CD8-positive, alpha-beta T cell (primary cell): ENCODE measurements at regions of chr2 and their contacts with region 1.

Region 1: DNA sequence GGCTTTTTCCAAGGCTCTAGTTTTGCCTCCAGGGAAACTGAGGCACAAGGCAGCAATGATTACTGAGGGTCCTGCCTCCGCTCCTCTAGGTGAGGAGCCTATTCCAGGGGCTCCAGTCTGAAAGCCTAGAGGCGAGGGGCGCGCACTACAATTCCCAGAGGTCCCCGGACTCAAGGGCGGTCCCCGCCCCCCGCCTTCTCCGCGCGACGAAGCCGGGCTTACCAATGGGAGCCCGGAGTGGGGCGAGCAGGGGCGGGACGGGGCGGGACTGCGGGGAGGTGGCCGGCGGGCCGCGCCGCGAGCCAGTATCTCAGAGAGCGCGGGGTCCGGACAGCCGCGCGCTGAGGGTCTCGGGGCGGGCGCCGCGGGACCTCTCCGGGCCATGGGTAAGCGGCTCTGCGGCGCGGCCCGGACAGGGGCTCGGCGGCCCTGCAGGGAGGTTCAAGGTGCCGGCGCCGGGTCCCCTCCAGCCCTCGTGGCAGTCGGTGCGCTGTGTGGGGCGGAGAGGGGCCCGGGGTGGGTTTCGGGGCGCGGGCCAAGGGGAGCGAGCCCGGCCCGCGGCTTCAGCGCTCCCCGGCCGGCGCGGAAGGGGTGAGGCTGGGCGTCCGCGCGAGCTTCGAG is at the start of gene ARID5A:
- DNase-seq: peak; percentile 84 to 95 (median 92)
- ATAC-seq: peak; percentile 48
- H3K4me3 ChIP-seq: peak within 1 kb of the TSS; percentile 81
- H3K4me3 Mint-ChIP-seq: peak within 1 kb of the TSS; percentile 98
- H3K27ac ChIP-seq: peak within 1 kb of the TSS; percentile 93 to 97
- H3K27ac Mint-ChIP-seq: peak within 1 kb of the TSS; percentile 100
- H3K4me1 ChIP-seq: peaks cover 43% of the 10 kb centered on the region
- H3K4me1 Mint-ChIP-seq: peaks cover 43% of the 10 kb centered on the region
- H3K27me3 ChIP-seq: no peaks in the 10 kb centered on the region
- H3K27me3 Mint-ChIP-seq: no peaks in the 10 kb centered on the region
- CTCF ChIP-seq: peak; percentile 48
- total RNA-seq, gene ARID5A: 408 to 413 TPM

Region 2: GRCh38 chr2:96116879-96117697 is 419.5 kb before region 1 on chr2:
- CTCF ChIA-PET with region 1: no interaction called
- POLR2A ChIA-PET with region 1: interaction called, 3 read pairs
- intact Hi-C with region 1: loop called in 1 of 2 experiments (anchors 5 kb)
- DNase-seq: peak; percentile 31 to 81 (median 61)
- ATAC-seq: peak; percentile 72
- H3K4me3 ChIP-seq: peak overlapping the region; percentile 7 to 50
- H3K4me3 Mint-ChIP-seq: peak overlapping the region; percentile 76
- H3K27ac ChIP-seq: no peak overlapping the region
- H3K27ac Mint-ChIP-seq: peak overlapping the region; percentile 74
- H3K4me1 ChIP-seq: peaks cover 8% of the 10 kb centered on the region
- H3K4me1 Mint-ChIP-seq: peaks cover 12% of the 10 kb centered on the region
- H3K27me3 ChIP-seq: peaks cover 0 to 3% of the 10 kb centered on the region in 2 experiments
- H3K27me3 Mint-ChIP-seq: peaks cover 23% of the 10 kb centered on the region
- CTCF ChIP-seq: peak; percentile 84

Region 3: GRCh38 chr2:96208143-96209010 is 328.2 kb before region 1 on chr2 and contains the start of gene STARD7:
- CTCF ChIA-PET with region 1: no interaction called
- POLR2A ChIA-PET with region 1: no interaction called
- intact Hi-C with region 1: loop called (anchors 2 to 5 kb)
- DNase-seq: peak; percentile 89 to 98 (median 96)
- ATAC-seq: peak; percentile 85
- H3K4me3 ChIP-seq: peak within 1 kb of the TSS; percentile 91
- H3K4me3 Mint-ChIP-seq: peak within 1 kb of the TSS; percentile 100
- H3K27ac ChIP-seq: peak within 1 kb of the TSS; percentile 75
- H3K27ac Mint-ChIP-seq: peak within 1 kb of the TSS; percentile 99
- H3K4me1 ChIP-seq: peaks cover 52% of the 10 kb centered on the region
- H3K4me1 Mint-ChIP-seq: peaks cover 54% of the 10 kb centered on the region
- H3K27me3 ChIP-seq: no peaks in the 10 kb centered on the region
- H3K27me3 Mint-ChIP-seq: no peaks in the 10 kb centered on the region
- CTCF ChIP-seq: no peak
- total RNA-seq, gene STARD7: 75.3 to 85.1 TPM

Region 4: GRCh38 chr2:96320728-96321622 is 215.6 kb before region 1 on chr2:
- CTCF ChIA-PET with region 1: no interaction called
- POLR2A ChIA-PET with region 1: interaction called, 10 read pairs
- intact Hi-C with region 1: no loop called
- DNase-seq: peak in 2 of 9 experiments; percentile 26 to 38
- ATAC-seq: no peak
- H3K4me3 ChIP-seq: peak overlapping the region; percentile 81 to 85
- H3K4me3 Mint-ChIP-seq: peak overlapping the region; percentile 92
- H3K27ac ChIP-seq: peak overlapping the region; percentile 38 to 71
- H3K27ac Mint-ChIP-seq: peak overlapping the region; percentile 90
- H3K4me1 ChIP-seq: peaks cover 28% of the 10 kb centered on the region
- H3K4me1 Mint-ChIP-seq: peaks cover 55% of the 10 kb centered on the region
- H3K27me3 ChIP-seq: no peaks in the 10 kb centered on the region
- H3K27me3 Mint-ChIP-seq: no peaks in the 10 kb centered on the region
- CTCF ChIP-seq: no peak

Region 5: GRCh38 chr2:96509114-96509846 is 27.3 kb before region 1 on chr2:
- CTCF ChIA-PET with region 1: interaction called, 27 read pairs
- POLR2A ChIA-PET with region 1: interaction called, 3 read pairs
- intact Hi-C with region 1: loop called in 1 of 2 experiments (anchors 1 kb)
- DNase-seq: peak in 8 of 9 experiments; percentile 35 to 73 (median 56)
- ATAC-seq: no peak
- H3K4me3 ChIP-seq: no peak overlapping the region
- H3K4me3 Mint-ChIP-seq: no peak overlapping the region
- H3K27ac ChIP-seq: no peak overlapping the region
- H3K27ac Mint-ChIP-seq: no peak overlapping the region
- H3K4me1 ChIP-seq: peaks cover 17% of the 10 kb centered on the region
- H3K4me1 Mint-ChIP-seq: peaks cover 10% of the 10 kb centered on the region
- H3K27me3 ChIP-seq: peaks cover 0 to 5% of the 10 kb centered on the region in 2 experiments
- H3K27me3 Mint-ChIP-seq: peaks cover 13% of the 10 kb centered on the region
- CTCF ChIP-seq: peak; percentile 45

Region 6: DNA sequence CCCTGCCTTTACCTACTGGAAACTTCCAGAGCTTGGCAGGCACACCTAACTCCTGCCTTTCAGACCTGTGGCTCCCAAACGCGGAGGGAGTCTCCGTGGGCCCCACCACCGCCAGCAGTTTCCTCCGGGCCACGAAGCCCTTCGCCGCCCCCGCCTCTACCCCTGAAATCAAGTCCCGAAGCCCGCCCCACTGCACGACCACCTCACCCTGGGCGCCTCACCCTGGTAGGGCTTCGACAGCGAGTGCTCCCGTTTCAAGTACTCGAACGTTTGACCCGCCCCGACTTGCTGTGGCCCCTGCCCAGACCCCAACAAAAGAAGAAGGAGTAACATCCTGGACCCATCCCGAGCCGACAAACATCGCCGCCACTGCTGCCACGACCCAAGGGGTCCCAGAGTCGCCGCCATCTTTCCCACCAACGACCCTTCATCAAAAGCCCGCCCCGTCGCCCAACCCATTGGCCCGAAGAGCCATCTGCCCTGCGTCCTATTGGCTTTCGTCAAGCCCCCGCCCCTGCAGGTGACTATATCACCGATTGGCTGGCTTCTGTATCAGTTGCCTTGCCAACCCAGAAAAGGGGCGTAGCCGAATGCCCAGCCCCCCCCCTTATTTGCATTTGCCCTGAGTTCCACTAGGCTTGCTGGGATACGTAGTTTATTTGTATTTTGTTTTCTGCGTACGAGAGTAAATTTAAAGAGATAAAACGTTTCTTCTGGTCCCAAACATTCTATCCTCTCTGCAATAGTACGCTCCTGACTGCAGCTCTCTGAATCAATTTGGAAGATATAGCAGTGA is 203.3 kb after region 1 on chr2 and contains the start of gene LMAN2L:
- CTCF ChIA-PET with region 1: no interaction called
- POLR2A ChIA-PET with region 1: no interaction called
- intact Hi-C with region 1: loop called in 1 of 2 experiments (anchors 1 kb)
- DNase-seq: peak; percentile 92 to 99 (median 96)
- ATAC-seq: peak; percentile 98
- H3K4me3 ChIP-seq: peak within 1 kb of the TSS; percentile 60 to 98
- H3K4me3 Mint-ChIP-seq: peak within 1 kb of the TSS; percentile 97
- H3K27ac ChIP-seq: peak within 1 kb of the TSS; percentile 46 to 73
- H3K27ac Mint-ChIP-seq: peak within 1 kb of the TSS; percentile 91
- H3K4me1 ChIP-seq: peaks cover 13% of the 10 kb centered on the region
- H3K4me1 Mint-ChIP-seq: peaks cover 38% of the 10 kb centered on the region
- H3K27me3 ChIP-seq: no peaks in the 10 kb centered on the region
- H3K27me3 Mint-ChIP-seq: no peaks in the 10 kb centered on the region
- CTCF ChIP-seq: no peak
- total RNA-seq, gene LMAN2L: 1.1 to 1.7 TPM